GM18951 (cell line): ENCODE measurements at regions of chr9 and their contacts with region 1.

Region 1: GRCh38 chr9:87324613-87325194 is 173.0 kb upstream of the DAPK1 start:
- POLR2A ChIP-seq: no peak

Region 2: GRCh38 chr9:86434039-86434726 is 890.5 kb before region 1 on chr9:
- in situ Hi-C with region 1: loop called (anchors 25 kb)
- POLR2A ChIP-seq: no peak